Left ventricle myocardium superior (tissue), 1 donor: ENCODE measurements at regions of chr13 and their contacts with region 1.

Region 1: DNA sequence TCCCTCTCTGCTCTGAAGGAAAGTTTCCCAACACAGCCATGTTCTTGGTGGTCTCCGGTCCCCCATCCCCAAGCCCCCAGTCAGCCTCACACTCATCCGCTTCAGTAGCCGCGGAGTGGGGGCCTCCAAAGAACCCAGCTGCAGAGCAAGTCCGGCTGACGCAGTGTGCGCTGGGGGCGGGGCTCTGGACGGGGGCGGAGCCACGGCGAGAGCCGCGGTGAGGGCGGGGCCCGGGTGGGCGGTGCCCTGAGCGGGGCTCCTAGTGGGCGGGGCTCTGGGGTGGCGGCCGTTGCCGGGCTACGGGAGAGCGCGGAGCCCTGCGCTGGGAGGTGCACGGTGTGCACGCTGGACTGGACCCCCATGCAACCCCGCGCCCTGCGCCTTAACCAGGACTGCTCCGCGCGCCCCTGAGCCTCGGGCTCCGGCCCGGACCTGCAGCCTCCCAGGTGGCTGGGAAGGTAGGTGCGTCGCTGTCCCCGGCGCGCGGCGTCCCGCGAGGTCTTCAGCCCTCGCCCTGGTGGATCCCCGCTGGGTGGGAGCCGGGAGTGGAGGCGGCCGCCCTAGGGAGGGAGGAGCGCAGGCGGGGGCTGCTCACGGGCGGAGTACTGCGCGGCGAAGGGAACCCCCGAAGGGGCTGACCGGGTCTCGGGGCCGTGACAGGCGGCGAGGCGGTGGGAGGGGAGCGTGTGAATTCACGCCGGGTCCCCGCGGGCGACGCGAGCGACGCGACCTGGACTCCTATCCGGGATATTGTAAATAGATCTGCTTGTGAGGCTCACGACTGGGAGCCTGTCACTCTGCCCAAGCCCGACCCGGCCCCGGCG is 9.1 kb downstream of the TNFRSF19 start:
- DNase-seq: peak; percentile 96
- ATAC-seq: peak; percentile 99

Region 2: DNA sequence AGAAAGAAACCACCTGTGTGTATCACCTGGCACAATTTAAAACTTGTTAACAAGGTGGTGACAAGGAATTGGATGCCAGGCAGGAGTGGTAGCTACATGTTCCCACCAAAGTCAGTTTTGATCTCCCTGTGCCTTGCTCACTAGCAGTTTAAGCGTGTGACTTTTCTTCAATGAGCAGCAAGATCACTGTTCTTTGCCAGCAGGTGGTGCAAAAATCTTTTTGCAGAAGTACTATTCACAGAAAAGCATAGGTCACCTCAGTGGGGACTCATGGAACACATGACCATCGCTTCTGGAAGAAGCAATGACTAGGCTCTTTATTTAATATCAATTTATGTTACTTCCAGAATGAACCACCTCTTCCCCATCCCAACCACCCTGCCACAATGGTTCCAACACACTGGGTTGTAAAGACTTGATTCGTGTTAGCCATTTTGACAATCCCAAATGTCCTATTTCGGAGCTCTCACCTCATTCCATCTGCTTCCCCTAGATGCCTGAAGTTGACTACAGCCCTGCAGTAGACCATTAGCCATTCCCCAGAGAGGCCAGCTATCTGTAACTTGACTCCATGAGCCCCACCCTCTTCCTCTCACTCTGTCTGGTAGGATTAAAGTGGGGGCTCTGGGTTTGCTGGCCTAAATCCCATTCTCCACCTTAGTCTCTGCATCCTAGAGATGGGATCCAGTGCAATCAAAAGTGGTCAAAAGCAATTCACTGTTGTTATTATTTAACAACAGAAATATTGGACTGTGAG is 68.1 kb before region 1 on chr13:
- intact Hi-C with region 1: loop called (anchors 10 kb)
- DNase-seq: no peak
- ATAC-seq: peak; percentile 36

Region 3: DNA sequence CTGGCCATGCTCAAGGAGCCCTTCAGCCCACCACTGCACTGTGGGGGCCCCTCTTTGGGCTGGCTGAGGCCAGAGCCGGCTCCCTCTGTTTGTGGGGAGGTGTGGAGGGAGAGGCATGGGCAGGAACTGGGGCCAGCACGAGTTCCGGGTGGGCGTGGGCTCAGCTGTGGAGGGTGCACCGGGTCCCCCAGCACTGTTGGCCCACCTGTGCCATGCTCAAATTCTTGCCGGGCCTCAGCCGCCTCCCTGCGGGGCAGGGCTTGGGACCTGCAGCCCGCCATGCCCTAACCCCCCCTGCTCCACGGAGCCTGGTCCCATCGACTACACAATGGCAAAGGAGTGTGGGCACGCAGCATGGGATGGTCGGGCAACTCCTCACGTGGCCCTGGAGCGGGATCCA is 47.8 kb before region 1 on chr13:
- intact Hi-C with region 1: no loop called
- DNase-seq: no peak
- ATAC-seq: no peak

Region 4: GRCh38 chr13:23715762-23716235 is 136.5 kb after region 1 on chr13:
- intact Hi-C with region 1: no loop called
- DNase-seq: no peak
- ATAC-seq: peak; percentile 32

Region 5: DNA sequence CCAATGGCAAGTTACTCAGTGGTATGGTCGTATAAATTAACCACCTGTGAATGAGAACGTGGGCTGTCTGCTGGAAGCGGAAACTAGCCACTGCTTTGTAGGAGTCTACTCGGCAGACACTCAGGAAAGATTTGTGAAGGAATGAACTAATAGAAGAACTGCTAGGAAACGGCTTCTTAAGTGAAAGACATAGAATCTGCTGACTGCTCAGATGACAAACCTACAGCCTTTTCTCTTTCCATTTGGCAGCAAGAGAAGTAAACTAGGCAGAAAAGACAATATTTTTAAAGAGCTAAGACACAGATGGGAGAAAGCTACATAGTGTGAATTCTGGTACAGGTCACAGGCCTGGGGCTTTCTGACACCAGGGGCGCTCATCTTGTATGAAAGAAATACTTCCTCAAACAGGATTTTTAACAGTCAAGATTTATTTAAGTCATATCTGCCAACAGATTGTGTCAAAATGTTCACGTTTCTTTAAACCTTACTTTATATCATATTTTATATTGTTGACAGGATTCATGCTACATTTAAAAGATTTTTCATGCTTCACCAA is 231.5 kb after region 1 on chr13:
- intact Hi-C with region 1: no loop called
- DNase-seq: no peak
- ATAC-seq: no peak

Region 6: GRCh38 chr13:23915308-23915707 is 336.0 kb after region 1 on chr13:
- intact Hi-C with region 1: no loop called
- DNase-seq: no peak
- ATAC-seq: no peak